Dorsolateral prefrontal cortex (tissue), 120 donors: ENCODE measurements at regions of chr7 and their contacts with region 1.

Region 1: DNA sequence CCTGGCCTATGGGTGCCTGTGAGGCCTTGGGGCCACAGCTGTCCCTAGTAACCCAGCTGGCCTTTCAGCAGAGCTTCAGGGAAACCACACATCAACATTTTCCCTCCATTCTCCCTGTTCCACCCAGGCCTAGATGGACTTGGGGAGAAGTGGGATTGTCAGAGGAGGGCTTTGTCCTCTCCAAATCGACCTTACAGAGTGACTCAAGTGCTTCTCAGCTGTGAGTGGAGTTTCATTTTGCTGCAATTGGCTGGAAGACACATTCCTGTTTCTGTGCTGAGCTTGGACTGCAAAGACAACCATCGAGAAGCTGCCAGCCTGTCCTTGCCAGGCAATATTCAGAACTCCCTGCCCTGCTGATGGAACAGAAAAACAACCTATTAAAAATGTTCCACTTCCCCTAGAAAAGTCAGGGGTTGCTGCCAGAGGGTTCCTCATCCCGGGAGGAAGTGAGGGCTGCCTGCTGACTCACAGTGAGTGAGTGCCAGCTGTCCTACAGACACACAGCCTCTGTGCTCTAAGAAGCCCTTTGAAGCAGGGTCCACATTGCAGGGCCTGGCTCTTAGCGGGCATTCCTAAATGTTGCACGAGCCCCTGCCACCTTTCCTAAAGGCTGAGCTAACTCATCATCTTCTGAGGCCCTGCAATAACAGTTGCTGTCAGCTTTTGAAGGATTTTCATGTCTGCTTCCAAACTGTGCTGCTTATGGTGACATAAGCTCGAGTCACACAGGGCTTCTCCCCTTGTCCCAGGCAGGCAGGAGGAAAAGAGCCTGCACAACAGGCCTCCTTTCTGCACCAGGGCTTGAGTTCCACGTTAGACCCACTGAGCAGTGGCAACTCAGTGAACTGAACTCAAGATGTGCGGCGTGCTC is 20.5 kb downstream of the STRA8 start:
- DNase-seq: peak; percentile 56 to 90 (median 82)
- H3K4me3 ChIP-seq: peak overlapping the region in 14 of 59 donors; percentile 2 to 33 (median 11)
- H3K27ac ChIP-seq: peak overlapping the region; percentile 78 to 99 (median 96)
- H3K27me3 ChIP-seq: no peaks in the 10 kb centered on the region
- CTCF ChIP-seq: peak in 7 of 56 donors; percentile 3 to 21 (median 10)

Region 2: GRCh38 chr7:135193615-135194081 is 60.5 kb before region 1 on chr7:
- intact Hi-C with region 1: no loop called
- DNase-seq: no peak
- H3K4me3 ChIP-seq: no peak overlapping the region
- H3K27ac ChIP-seq: no peak overlapping the region
- H3K27me3 ChIP-seq: no peaks in the 10 kb centered on the region
- CTCF ChIP-seq: no peak

Region 3: DNA sequence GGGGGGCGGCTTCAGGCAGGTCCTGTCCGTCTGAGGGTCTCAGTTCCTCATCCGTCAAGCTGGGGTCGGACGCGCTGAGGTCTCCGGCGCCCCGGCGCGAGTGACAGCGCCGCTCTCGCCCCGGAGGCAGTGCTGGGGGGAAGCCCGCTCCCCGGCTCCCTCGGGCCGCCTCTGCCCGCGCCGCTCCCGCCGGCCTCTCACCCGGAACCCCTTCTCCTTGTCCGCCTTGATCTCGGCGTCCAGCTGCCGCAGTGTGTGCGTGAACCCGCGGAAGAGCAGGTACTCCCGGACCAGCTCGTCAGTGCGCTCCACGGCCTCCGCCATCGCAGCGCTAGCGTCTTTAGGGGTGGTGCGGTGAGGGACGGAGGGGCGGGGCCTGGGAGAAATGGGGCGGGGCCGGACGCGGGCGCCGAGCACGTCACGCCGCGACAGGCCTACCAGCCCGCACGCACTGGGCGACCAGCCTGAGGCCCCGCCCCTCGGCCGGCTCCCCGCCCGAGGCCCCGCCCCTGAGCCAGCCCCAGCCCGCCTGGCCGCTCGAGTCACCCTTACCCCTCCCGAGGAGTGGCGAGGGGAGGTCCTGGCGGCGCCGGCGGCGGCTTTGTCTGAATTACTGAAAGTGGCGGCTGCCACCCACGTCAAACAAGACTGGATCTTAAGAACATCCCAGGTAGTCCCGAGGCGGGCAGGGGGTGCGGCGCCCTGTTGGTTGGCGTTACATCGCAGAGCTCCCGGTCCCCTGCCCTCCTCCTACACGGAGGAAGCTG is 42.8 kb before region 1 on chr7 and contains the start of gene WDR91:
- intact Hi-C with region 1: loop called (anchors 5 kb)
- DNase-seq: peak; percentile 94 to 98 (median 96)
- H3K4me3 ChIP-seq: peak within 1 kb of the TSS; percentile 66 to 100 (median 91)
- H3K27ac ChIP-seq: peak within 1 kb of the TSS; percentile 64 to 97 (median 90)
- H3K27me3 ChIP-seq: no peaks in the 10 kb centered on the region
- CTCF ChIP-seq: peak in 35 of 56 donors; percentile 3 to 66 (median 29)
- total RNA-seq, gene WDR91: 24.7 to 53.9 (median 37.4) TPM

Region 4: GRCh38 chr7:135281363-135281949 is 27.3 kb after region 1 on chr7:
- intact Hi-C with region 1: no loop called
- DNase-seq: peak; percentile 43 to 93 (median 80)
- H3K4me3 ChIP-seq: peak overlapping the region in 32 of 59 donors; percentile 4 to 45 (median 29)
- H3K27ac ChIP-seq: peak overlapping the region in 5 of 59 donors; percentile 11 to 70 (median 16)
- H3K27me3 ChIP-seq: no peaks in the 10 kb centered on the region
- CTCF ChIP-seq: peak; percentile 95 to 100 (median 99)

Region 5: GRCh38 chr7:135342887-135343286 is 88.8 kb after region 1 on chr7:
- intact Hi-C with region 1: no loop called
- DNase-seq: peak; percentile 21 to 82 (median 66)
- H3K4me3 ChIP-seq: peak overlapping the region in 8 of 59 donors; percentile 1 to 35 (median 24)
- H3K27ac ChIP-seq: peak overlapping the region in 4 of 59 donors; percentile 13 to 44 (median 17)
- H3K27me3 ChIP-seq: no peaks in the 10 kb centered on the region
- CTCF ChIP-seq: no peak